ENCODE measurements at regions of chr18 and their contacts with region 1.

Region 1: DNA sequence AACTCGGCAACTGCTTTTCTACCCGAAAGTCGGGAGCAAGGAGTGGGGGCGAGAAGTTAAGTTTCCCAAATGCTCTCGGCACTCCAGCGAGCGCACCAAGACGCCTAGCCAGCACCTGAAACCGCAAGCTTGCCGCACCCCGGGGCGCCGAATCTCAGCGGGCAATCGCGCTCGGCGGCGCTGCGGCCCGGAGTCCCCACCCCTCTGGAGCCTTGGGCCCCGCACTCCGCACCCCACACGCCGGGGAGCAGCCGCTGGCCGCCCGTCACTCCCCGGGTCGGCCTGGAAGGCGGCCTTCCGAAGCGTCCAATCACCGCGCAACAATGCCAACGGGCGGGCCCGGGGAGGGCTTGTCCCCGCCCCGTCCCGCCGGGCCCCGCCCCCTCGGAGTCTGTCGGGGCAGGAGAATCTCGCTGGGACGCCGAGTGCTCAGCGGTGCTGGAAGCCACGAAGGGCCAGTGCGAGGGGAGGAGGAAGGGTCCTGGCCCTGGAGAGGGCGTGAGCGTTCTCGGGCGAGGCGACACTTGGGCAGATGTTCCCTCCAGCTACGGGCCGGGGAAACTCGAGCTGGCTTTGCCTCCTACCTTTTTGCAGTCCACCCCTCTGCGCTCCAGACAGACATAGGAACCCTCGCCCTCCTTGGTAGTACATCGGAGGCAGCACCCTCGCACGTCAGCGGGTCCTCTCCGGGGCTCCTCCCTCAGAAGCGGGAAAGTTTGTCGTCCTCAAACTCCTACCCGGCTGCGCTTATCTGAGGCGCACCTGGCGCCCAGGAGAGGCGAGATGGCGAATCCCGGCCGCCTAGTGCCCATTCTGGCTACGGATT is 1.1 kb upstream of the ZBTB7C start:
- DNase-seq: peak; percentile 95
- H3K4me3 Mint-ChIP-seq: peak overlapping the region; percentile 70
- H3K27ac Mint-ChIP-seq: no peak overlapping the region
- H3K4me1 Mint-ChIP-seq: peaks cover 7% of the 10 kb centered on the region
- H3K27me3 Mint-ChIP-seq: peaks cover 74% of the 10 kb centered on the region

Region 2: GRCh38 chr18:48136531-48137332 is 273.6 kb before region 1 on chr18:
- intact Hi-C with region 1: loop called (anchors 5 kb)
- DNase-seq: no peak
- H3K4me3 Mint-ChIP-seq: peak overlapping the region; percentile 75
- H3K27ac Mint-ChIP-seq: peak overlapping the region; percentile 78
- H3K4me1 Mint-ChIP-seq: peaks cover 34% of the 10 kb centered on the region
- H3K27me3 Mint-ChIP-seq: peaks cover 67% of the 10 kb centered on the region

Region 3: GRCh38 chr18:48161191-48161910 is 249.0 kb before region 1 on chr18:
- intact Hi-C with region 1: loop called (anchors 10 kb)
- DNase-seq: peak; percentile 89
- H3K4me3 Mint-ChIP-seq: peak overlapping the region; percentile 75
- H3K27ac Mint-ChIP-seq: peak overlapping the region; percentile 60
- H3K4me1 Mint-ChIP-seq: peaks cover 8% of the 10 kb centered on the region
- H3K27me3 Mint-ChIP-seq: peaks cover 45% of the 10 kb centered on the region

Region 4: DNA sequence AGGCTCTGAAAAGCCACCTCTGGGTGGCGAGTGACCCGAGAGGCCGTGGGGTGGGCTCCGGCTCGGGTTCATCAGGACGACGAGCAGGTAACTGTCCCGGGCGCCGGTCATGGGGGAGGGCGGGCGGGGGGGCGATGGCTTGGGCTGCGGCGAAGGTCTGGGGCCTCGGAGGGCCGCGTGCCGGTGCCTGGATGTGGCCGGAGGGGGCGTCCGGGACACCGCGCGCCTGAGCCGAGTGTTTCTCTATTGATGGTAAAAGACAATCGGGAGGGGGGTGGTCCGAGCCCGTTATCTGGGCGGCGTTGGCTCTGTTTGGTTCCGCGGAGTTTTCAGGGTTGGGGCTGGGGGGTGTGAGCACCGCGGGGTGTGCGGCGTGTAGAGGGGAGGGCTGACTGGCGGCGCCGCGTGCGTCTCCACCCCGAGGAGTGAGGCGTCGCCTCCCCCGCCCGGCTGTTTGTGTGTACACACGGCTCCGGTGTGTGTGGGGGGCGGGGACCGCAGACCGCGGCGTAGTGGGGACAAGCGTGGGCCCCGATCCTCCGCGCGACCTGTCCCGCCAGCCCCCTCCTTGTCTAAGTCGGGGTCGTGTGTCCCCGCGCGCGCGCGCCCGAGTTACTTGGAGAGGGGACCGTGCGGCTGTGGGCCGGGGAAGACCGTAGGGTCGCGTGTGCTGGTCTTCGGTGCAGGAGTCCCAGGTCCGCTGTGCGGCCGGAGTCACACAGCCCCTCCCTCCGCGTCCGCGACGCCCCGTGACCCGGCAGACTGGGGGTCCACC is 130.1 kb after region 1 on chr18:
- intact Hi-C with region 1: loop called (anchors 1 kb)
- DNase-seq: peak; percentile 83
- H3K4me3 Mint-ChIP-seq: peak overlapping the region; percentile 84
- H3K27ac Mint-ChIP-seq: no peak overlapping the region
- H3K4me1 Mint-ChIP-seq: peaks cover 16% of the 10 kb centered on the region
- H3K27me3 Mint-ChIP-seq: peaks cover 33% of the 10 kb centered on the region

Region 5: GRCh38 chr18:49258938-49259337 is 848.6 kb after region 1 on chr18:
- intact Hi-C with region 1: no loop called
- DNase-seq: no peak
- H3K4me3 Mint-ChIP-seq: no peak overlapping the region
- H3K27ac Mint-ChIP-seq: no peak overlapping the region
- H3K4me1 Mint-ChIP-seq: no peaks in the 10 kb centered on the region
- H3K27me3 Mint-ChIP-seq: no peaks in the 10 kb centered on the region

Measured in activated CD4-positive, alpha-beta T cell treated with anti-CD3 and anti-CD28 coated beads, Interleukin-2, amount 10 ng/mL, durations not matched to agents 24 days and 14 days (primary cell).